Activated B cell treated with CpG ODN at 0.5 μM for 24 hours (primary cell): ENCODE measurements at regions of chr3 and their contacts with region 1.

Region 1: DNA sequence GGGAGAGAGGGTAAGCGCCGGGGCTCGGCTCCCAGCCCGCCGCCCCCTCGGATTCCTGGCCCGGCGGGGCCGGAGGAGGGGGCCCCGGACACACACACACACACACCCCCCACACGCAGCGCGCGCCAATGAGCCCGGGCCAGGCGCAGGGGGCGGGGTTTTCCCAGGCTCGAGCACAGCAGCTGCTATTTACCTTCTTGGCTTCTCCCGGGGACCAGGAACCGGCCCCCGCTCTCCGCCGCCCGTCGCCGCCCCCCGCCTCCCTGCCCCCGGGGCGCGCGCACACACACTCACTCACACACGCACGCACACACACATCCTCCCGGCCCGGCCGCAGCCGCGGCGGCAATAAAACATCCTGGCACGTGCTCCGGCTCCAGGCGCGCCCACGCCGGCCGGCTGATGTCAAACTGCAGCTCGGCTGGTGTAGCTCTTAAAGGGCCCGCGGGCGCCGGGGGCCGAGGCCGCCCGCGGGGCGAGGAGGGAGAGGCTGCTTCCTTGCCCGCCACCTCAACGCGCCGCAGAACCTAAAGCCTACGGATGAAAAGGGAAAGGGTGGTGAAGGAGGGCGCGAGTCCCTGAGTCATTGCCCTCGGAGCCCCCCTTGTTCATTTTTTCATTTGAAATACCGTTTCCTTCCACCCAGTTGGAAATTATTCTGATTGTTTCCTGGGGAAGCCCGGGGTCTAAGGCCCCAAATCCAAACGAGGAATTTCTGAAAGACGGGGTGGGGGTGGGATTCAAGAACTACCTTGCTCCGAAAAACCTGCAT is 1.0 kb upstream of the HES1 start:
- DNase-seq: peak; percentile 82
- ATAC-seq: peak; percentile 37
- H3K4me3 Mint-ChIP-seq: peak overlapping the region; percentile 92
- H3K27ac Mint-ChIP-seq: peak overlapping the region; percentile 96
- H3K4me1 Mint-ChIP-seq: peaks cover 78% of the 10 kb centered on the region
- H3K27me3 Mint-ChIP-seq: peaks cover 1% of the 10 kb centered on the region
- CTCF ChIP-seq: no peak

Region 2: GRCh38 chr3:192467230-192468140 is 1667.5 kb before region 1 on chr3:
- CTCF ChIA-PET with region 1: no interaction called
- POLR2A ChIA-PET with region 1: no interaction called
- intact Hi-C with region 1: loop called (anchors 5 kb)
- DNase-seq: no peak
- ATAC-seq: peak; percentile 81
- H3K4me3 Mint-ChIP-seq: no peak overlapping the region
- H3K27ac Mint-ChIP-seq: no peak overlapping the region
- H3K4me1 Mint-ChIP-seq: no peaks in the 10 kb centered on the region
- H3K27me3 Mint-ChIP-seq: peaks cover 24% of the 10 kb centered on the region
- CTCF ChIP-seq: peak; percentile 90

Region 3: DNA sequence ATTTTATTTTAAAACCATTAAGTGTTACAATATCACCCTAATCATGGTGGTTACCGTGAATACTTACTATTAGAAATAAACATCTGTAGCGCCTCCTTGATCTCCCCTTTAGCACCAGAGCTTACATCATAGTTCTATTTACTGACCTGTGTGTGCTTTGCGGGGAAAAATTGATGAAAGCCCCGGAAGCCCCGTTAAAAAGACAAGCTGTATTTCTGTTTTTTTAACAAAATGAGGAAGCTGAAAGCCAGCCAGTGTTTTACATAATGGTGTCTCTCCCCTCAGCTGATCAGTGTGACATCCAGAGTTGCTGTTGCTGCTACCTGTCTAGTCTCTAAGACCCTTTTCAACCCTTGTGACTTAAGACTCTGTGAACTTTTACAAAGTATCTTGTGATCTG is 441.2 kb before region 1 on chr3:
- CTCF ChIA-PET with region 1: interaction called, 3 read pairs
- POLR2A ChIA-PET with region 1: interaction called, 6 read pairs
- intact Hi-C with region 1: loop called (anchors 10 kb)
- DNase-seq: no peak
- ATAC-seq: peak; percentile 89
- H3K4me3 Mint-ChIP-seq: peak overlapping the region; percentile 61
- H3K27ac Mint-ChIP-seq: peak overlapping the region; percentile 91
- H3K4me1 Mint-ChIP-seq: peaks cover 24% of the 10 kb centered on the region
- H3K27me3 Mint-ChIP-seq: no peaks in the 10 kb centered on the region
- CTCF ChIP-seq: no peak

Region 4: GRCh38 chr3:193869221-193870201 is 265.4 kb before region 1 on chr3:
- CTCF ChIA-PET with region 1: interaction called, 6 read pairs
- POLR2A ChIA-PET with region 1: interaction called, 4 read pairs
- intact Hi-C with region 1: loop called (anchors 1 kb)
- DNase-seq: no peak
- ATAC-seq: peak; percentile 9
- H3K4me3 Mint-ChIP-seq: peak overlapping the region; percentile 71
- H3K27ac Mint-ChIP-seq: no peak overlapping the region
- H3K4me1 Mint-ChIP-seq: peaks cover 85% of the 10 kb centered on the region
- H3K27me3 Mint-ChIP-seq: no peaks in the 10 kb centered on the region
- CTCF ChIP-seq: no peak

Region 5: GRCh38 chr3:194070634-194071409 is 64.1 kb before region 1 on chr3:
- CTCF ChIA-PET with region 1: interaction called, 6 read pairs
- POLR2A ChIA-PET with region 1: interaction called, 88 read pairs
- intact Hi-C with region 1: loop called (anchors 1 kb)
- DNase-seq: peak; percentile 93
- ATAC-seq: peak; percentile 93
- H3K4me3 Mint-ChIP-seq: peak overlapping the region; percentile 76
- H3K27ac Mint-ChIP-seq: peak overlapping the region; percentile 84
- H3K4me1 Mint-ChIP-seq: peaks cover 41% of the 10 kb centered on the region
- H3K27me3 Mint-ChIP-seq: no peaks in the 10 kb centered on the region
- CTCF ChIP-seq: no peak

Region 6: GRCh38 chr3:194204042-194204987 is 69.4 kb after region 1 on chr3:
- CTCF ChIA-PET with region 1: no interaction called
- POLR2A ChIA-PET with region 1: no interaction called
- intact Hi-C with region 1: loop called (anchors 5 kb)
- DNase-seq: peak; percentile 30
- ATAC-seq: peak; percentile 61
- H3K4me3 Mint-ChIP-seq: peak overlapping the region; percentile 80
- H3K27ac Mint-ChIP-seq: peak overlapping the region; percentile 54
- H3K4me1 Mint-ChIP-seq: peaks cover 32% of the 10 kb centered on the region
- H3K27me3 Mint-ChIP-seq: peaks cover 32% of the 10 kb centered on the region
- CTCF ChIP-seq: no peak

Region 7: GRCh38 chr3:194583604-194584318 is 448.8 kb after region 1 on chr3:
- CTCF ChIA-PET with region 1: no interaction called
- POLR2A ChIA-PET with region 1: no interaction called
- intact Hi-C with region 1: loop called (anchors 5 kb)
- DNase-seq: peak; percentile 95
- ATAC-seq: peak; percentile 92
- H3K4me3 Mint-ChIP-seq: peak overlapping the region; percentile 94
- H3K27ac Mint-ChIP-seq: peak overlapping the region; percentile 97
- H3K4me1 Mint-ChIP-seq: peaks cover 16% of the 10 kb centered on the region
- H3K27me3 Mint-ChIP-seq: no peaks in the 10 kb centered on the region
- CTCF ChIP-seq: no peak